CD4-positive, alpha-beta T cell (primary cell): ENCODE measurements at regions of chr16 and their contacts with region 1.

Region 1: DNA sequence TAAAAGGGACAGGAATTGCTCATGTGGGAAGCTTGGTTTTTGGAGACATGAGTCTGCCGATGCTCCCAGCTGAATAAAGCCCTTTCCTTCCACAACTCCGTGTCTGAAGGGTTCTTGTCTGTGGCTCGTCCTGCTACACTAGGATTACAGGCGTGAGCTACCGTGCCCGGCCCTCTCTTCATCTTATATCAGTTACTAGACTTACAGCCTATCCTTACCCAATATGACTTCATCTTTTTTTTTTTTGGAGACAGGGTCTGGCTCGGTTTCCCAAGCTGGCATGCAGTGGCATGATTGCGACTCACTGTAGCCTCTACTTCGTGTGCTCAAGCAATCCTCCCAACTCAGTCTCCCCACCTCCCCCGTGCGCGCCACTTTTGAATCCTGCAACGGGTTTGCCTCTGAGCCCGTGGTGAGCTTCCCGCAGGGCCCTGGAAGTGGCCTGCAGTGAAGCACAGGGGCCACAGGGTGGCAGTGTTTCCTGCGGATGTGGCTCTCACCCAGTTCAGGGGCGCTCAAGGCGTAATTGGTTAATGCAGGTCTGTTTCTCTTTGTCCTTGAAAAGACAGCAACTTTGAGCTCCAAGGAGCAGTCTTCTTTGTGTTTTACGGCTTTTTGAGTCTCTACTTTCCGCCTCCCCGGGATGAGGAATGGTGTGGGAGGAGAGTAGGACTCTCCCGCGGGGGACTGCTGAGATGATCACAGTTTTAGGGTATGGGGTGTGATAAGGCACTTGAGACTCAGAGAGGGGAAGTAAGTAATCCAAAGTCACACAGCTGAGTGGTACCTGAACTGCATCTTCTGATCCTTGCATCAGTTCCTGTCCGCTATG is 22.7 kb upstream of the GPRC5B start:
- DNase-seq: peak; percentile 54 to 83 (median 63)
- ATAC-seq: peak; percentile 100
- H3K4me3 ChIP-seq: peak overlapping the region; percentile 24
- H3K4me3 Mint-ChIP-seq: peak overlapping the region; percentile 66
- H3K27ac ChIP-seq: no peak overlapping the region
- H3K27ac Mint-ChIP-seq: no peak overlapping the region
- H3K4me1 ChIP-seq: peaks cover 10% of the 10 kb centered on the region
- H3K4me1 Mint-ChIP-seq: peaks cover 10% of the 10 kb centered on the region
- H3K27me3 ChIP-seq: peaks cover 0 to 3% of the 10 kb centered on the region in 2 experiments
- H3K27me3 Mint-ChIP-seq: peaks cover 19% of the 10 kb centered on the region
- CTCF ChIP-seq: peak; percentile 97

Region 2: DNA sequence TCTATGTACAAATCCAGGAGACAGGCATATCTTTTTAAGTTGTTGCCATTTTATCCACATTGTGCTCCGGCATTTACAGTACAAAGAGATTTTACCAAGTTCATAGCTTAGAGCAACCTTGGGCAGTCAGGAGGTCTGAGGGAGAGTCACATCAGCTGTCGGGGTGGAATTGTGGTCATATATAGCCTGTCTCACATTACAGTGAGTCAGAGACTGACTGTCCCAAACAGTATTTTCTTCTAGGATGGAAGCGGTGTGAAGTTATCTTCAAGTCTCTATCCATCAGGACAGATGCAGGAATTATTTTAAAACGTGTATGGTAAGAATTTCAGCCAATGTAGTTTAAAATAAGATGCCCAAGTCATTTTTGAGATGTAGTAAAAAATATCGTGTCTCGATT is 75.7 kb before region 1 on chr16:
- CTCF ChIA-PET with region 1: no interaction called
- POLR2A ChIA-PET with region 1: no interaction called
- intact Hi-C with region 1: no loop called
- DNase-seq: no peak
- ATAC-seq: no peak
- H3K4me3 ChIP-seq: no peak overlapping the region
- H3K4me3 Mint-ChIP-seq: no peak overlapping the region
- H3K27ac ChIP-seq: no peak overlapping the region
- H3K27ac Mint-ChIP-seq: no peak overlapping the region
- H3K4me1 ChIP-seq: no peaks in the 10 kb centered on the region
- H3K4me1 Mint-ChIP-seq: no peaks in the 10 kb centered on the region
- H3K27me3 ChIP-seq: no peaks in the 10 kb centered on the region
- H3K27me3 Mint-ChIP-seq: no peaks in the 10 kb centered on the region
- CTCF ChIP-seq: no peak

Region 3: GRCh38 chr16:19919142-19919541 is 11.8 kb after region 1 on chr16:
- CTCF ChIA-PET with region 1: no interaction called
- POLR2A ChIA-PET with region 1: no interaction called
- intact Hi-C with region 1: no loop called
- DNase-seq: no peak
- ATAC-seq: no peak
- H3K4me3 ChIP-seq: no peak overlapping the region
- H3K4me3 Mint-ChIP-seq: no peak overlapping the region
- H3K27ac ChIP-seq: no peak overlapping the region
- H3K27ac Mint-ChIP-seq: no peak overlapping the region
- H3K4me1 ChIP-seq: no peaks in the 10 kb centered on the region
- H3K4me1 Mint-ChIP-seq: no peaks in the 10 kb centered on the region
- H3K27me3 ChIP-seq: peaks cover 0 to 3% of the 10 kb centered on the region in 2 experiments
- H3K27me3 Mint-ChIP-seq: peaks cover 9% of the 10 kb centered on the region
- CTCF ChIP-seq: no peak

Region 4: DNA sequence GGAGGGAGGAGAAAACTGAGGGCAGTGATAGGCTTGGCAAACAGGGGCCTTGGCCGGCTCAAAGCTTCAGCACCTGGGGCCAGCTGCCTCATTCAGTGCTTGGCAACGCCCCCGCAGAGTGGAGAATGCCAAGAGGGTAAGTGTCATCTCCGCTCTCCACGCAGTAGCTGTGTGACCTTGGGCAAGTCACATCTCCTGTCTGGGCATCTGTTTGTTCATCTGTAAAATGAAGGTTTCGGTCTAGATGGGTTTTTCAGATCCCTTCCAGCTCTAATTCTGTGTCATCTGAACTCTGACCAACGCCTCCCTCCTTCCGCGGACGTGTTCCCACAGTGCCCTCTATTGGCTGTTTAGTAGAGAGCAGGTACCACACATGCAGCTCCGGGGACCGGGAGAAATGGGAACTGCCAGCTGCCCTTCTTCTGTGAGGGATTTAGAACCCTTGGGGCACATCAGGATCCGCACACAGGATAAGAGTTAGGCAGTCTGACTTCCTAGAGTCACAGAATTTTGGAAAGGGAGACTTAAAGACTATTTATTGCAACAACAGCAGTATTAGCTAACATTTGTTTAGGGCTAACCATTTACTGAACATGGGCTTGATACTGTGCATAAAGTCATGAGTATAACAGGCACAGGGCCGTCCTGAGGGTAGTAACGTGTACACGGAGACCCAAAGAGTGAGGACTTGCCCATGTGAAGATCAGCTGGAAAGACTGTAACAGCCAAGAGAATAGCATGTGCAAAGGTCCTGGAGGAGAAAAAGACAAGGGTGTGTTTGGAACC is 393.1 kb after region 1 on chr16:
- CTCF ChIA-PET with region 1: interaction called, 4 read pairs
- POLR2A ChIA-PET with region 1: no interaction called
- intact Hi-C with region 1: loop called in 1 of 2 experiments (anchors 2 kb)
- DNase-seq: peak in 8 of 14 experiments; percentile 1 to 39 (median 6)
- ATAC-seq: no peak
- H3K4me3 ChIP-seq: no peak overlapping the region
- H3K4me3 Mint-ChIP-seq: no peak overlapping the region
- H3K27ac ChIP-seq: no peak overlapping the region
- H3K27ac Mint-ChIP-seq: no peak overlapping the region
- H3K4me1 ChIP-seq: no peaks in the 10 kb centered on the region
- H3K4me1 Mint-ChIP-seq: no peaks in the 10 kb centered on the region
- H3K27me3 ChIP-seq: peaks cover 0 to 5% of the 10 kb centered on the region in 2 experiments
- H3K27me3 Mint-ChIP-seq: peaks cover 14% of the 10 kb centered on the region
- CTCF ChIP-seq: peak; percentile 42

Region 5: GRCh38 chr16:20383106-20384029 is 476.0 kb after region 1 on chr16:
- CTCF ChIA-PET with region 1: interaction called, 14 read pairs
- POLR2A ChIA-PET with region 1: no interaction called
- intact Hi-C with region 1: loop called (anchors 1 kb)
- DNase-seq: peak in 13 of 14 experiments; percentile 3 to 63 (median 17)
- ATAC-seq: peak; percentile 66
- H3K4me3 ChIP-seq: no peak overlapping the region
- H3K4me3 Mint-ChIP-seq: no peak overlapping the region
- H3K27ac ChIP-seq: no peak overlapping the region
- H3K27ac Mint-ChIP-seq: no peak overlapping the region
- H3K4me1 ChIP-seq: peaks cover 6% of the 10 kb centered on the region
- H3K4me1 Mint-ChIP-seq: no peaks in the 10 kb centered on the region
- H3K27me3 ChIP-seq: peaks cover 7 to 8% of the 10 kb centered on the region in 2 experiments
- H3K27me3 Mint-ChIP-seq: peaks cover 38% of the 10 kb centered on the region
- CTCF ChIP-seq: peak; percentile 66